Panc1 (cell line): ENCODE measurements at regions of chr4 and their contacts with region 1.

Region 1: GRCh38 chr4:152436384-152436783 is 99.5 kb downstream of the FBXW7 start:
- DNase-seq: no peak
- ATAC-seq: no peak
- H3K4me3 ChIP-seq: no peak overlapping the region
- H3K27ac ChIP-seq: no peak overlapping the region
- H3K4me1 ChIP-seq: no peaks in the 10 kb centered on the region
- H3K27me3 ChIP-seq: no peaks in the 10 kb centered on the region
- CTCF ChIP-seq: peak; percentile 22

Region 2: GRCh38 chr4:151808120-151808529 is 628.3 kb before region 1 on chr4:
- CTCF ChIA-PET with region 1: no interaction called
- POLR2A ChIA-PET with region 1: interaction called, 12 read pairs
- in situ Hi-C with region 1: no loop called
- intact Hi-C with region 1: no loop called
- DNase-seq: no peak
- ATAC-seq: no peak
- H3K4me3 ChIP-seq: no peak overlapping the region
- H3K27ac ChIP-seq: no peak overlapping the region
- H3K4me1 ChIP-seq: no peaks in the 10 kb centered on the region
- H3K27me3 ChIP-seq: no peaks in the 10 kb centered on the region
- CTCF ChIP-seq: no peak

Region 3: DNA sequence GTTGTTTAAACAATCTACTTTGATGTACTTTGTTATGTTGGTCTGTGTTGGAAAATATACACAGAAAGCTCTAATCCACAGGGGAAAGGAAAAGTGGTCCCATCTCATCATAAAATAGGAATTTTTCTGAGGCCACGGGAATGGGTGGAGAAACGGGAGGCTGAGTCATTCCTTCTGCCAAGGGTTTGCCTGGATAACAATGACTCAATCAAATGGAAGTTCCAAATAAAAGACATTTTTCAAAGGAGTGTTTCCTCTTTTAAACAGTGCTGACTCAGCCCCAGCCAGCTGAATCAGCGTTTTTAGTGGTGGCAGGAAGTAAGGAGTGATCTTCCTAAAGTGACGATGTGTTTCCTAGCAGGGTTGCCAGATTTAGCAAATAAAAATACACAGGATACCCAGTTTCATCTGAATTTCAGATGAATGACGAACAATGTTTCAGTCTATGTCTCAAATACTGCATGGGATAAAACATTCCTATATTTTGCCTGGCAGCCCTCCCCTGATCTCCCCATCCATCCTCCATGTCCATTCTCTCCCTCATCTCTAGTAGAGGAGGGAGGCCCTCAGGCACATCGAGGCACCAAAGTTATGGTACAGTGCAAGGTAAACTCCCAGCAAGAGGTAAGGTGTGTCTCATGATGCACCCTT is 330.1 kb before region 1 on chr4:
- CTCF ChIA-PET with region 1: no interaction called
- POLR2A ChIA-PET with region 1: no interaction called
- in situ Hi-C with region 1: no loop called
- intact Hi-C with region 1: no loop called
- DNase-seq: peak; percentile 73
- ATAC-seq: peak; percentile 82
- H3K4me3 ChIP-seq: no peak overlapping the region
- H3K27ac ChIP-seq: no peak overlapping the region
- H3K4me1 ChIP-seq: no peaks in the 10 kb centered on the region
- H3K27me3 ChIP-seq: no peaks in the 10 kb centered on the region
- CTCF ChIP-seq: no peak

Region 4: GRCh38 chr4:152468408-152468807 is 32.0 kb after region 1 on chr4:
- CTCF ChIA-PET with region 1: no interaction called
- POLR2A ChIA-PET with region 1: no interaction called
- in situ Hi-C with region 1: no loop called
- intact Hi-C with region 1: no loop called
- DNase-seq: no peak
- ATAC-seq: no peak
- H3K4me3 ChIP-seq: no peak overlapping the region
- H3K27ac ChIP-seq: no peak overlapping the region
- H3K4me1 ChIP-seq: no peaks in the 10 kb centered on the region
- H3K27me3 ChIP-seq: no peaks in the 10 kb centered on the region
- CTCF ChIP-seq: no peak